SK-N-SH (cell line): ENCODE measurements at regions of chr19 and their contacts with region 1.

Region 1: GRCh38 chr19:46009530-46010510 is 13.0 kb downstream of the PGLYRP1 start:
- DNase-seq: peak; percentile 80
- H3K4me3 ChIP-seq: no peak overlapping the region
- H3K27ac ChIP-seq: no peak overlapping the region
- H3K4me1 ChIP-seq: peaks cover 0 to 6% of the 10 kb centered on the region in 2 experiments; a peak in 2 of 4 replicates
- H3K27me3 ChIP-seq: no peaks in the 10 kb centered on the region
- CTCF ChIP-seq: peak; percentile 83
- EP300 ChIP-seq: no peak
- RAD21 ChIP-seq: peak; percentile 62

Region 2: DNA sequence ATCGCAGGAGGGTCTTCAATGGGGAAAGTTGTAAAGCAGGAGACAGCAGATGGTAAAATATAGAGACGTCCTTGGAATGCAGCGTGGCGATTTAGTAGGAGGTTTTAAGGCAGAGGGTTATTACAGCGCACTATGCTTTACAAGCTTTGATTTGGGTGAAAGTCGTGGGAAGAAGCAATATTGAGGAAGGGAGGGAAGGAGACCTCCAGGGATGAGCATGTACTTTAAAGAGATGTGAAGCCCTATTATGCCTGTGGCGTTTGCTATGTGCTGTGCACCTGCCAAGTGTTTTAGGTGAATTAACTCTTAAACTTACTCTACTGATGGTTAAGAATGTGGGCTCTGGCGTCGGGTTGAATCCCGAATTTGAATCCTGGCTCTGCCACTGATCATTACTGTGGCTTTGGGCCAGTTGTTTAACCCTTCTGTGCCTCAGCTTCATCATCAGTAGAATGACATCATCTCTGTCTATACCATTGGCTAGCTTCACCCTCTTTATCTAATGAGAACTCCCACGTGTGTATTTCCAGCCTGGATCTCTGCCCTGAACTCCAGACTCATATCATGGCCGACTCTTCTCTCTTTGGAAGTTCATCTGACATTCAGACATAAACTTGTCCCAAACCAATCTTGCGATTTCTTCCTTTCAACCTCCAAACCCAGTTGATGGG is 14.0 kb before region 1 on chr19:
- CTCF ChIA-PET with region 1: interaction called, 13 read pairs
- POLR2A ChIA-PET with region 1: no interaction called
- DNase-seq: no peak
- H3K4me3 ChIP-seq: peak overlapping the region; percentile 73 to 84
- H3K27ac ChIP-seq: peak overlapping the region; percentile 35 to 47; a peak in 2 of 4 replicates
- H3K4me1 ChIP-seq: peaks cover 0 to 12% of the 10 kb centered on the region in 2 experiments; a peak in 1 of 4 replicates
- H3K27me3 ChIP-seq: no peaks in the 10 kb centered on the region
- CTCF ChIP-seq: no peak
- EP300 ChIP-seq: no peak
- RAD21 ChIP-seq: no peak

Region 3: GRCh38 chr19:46141411-46141810 is 131.6 kb after region 1 on chr19:
- CTCF ChIA-PET with region 1: no interaction called
- POLR2A ChIA-PET with region 1: no interaction called
- DNase-seq: no peak
- H3K4me3 ChIP-seq: no peak overlapping the region
- H3K27ac ChIP-seq: no peak overlapping the region
- H3K4me1 ChIP-seq: no peaks in the 10 kb centered on the region
- H3K27me3 ChIP-seq: no peaks in the 10 kb centered on the region
- CTCF ChIP-seq: no peak
- EP300 ChIP-seq: no peak
- RAD21 ChIP-seq: no peak